Activated B cell treated with CpG ODN at 0.5 μM for 24 hours (primary cell): ENCODE measurements at regions of chr6 and their contacts with region 1.

Region 1: GRCh38 chr6:110528101-110528929 is 51.9 kb upstream of the SLC22A16 start:
- DNase-seq: no peak
- ATAC-seq: peak; percentile 70
- H3K4me3 Mint-ChIP-seq: no peak overlapping the region
- H3K27ac Mint-ChIP-seq: no peak overlapping the region
- H3K4me1 Mint-ChIP-seq: no peaks in the 10 kb centered on the region
- H3K27me3 Mint-ChIP-seq: peaks cover 3% of the 10 kb centered on the region
- CTCF ChIP-seq: no peak

Region 2: GRCh38 chr6:110949679-110950285 is 421.5 kb after region 1 on chr6:
- CTCF ChIA-PET with region 1: interaction called, 9 read pairs
- POLR2A ChIA-PET with region 1: no interaction called
- intact Hi-C with region 1: loop called (anchors 1 kb)
- DNase-seq: no peak
- ATAC-seq: no peak
- H3K4me3 Mint-ChIP-seq: no peak overlapping the region
- H3K27ac Mint-ChIP-seq: no peak overlapping the region
- H3K4me1 Mint-ChIP-seq: peaks cover 1% of the 10 kb centered on the region
- H3K27me3 Mint-ChIP-seq: no peaks in the 10 kb centered on the region
- CTCF ChIP-seq: no peak

Region 3: DNA sequence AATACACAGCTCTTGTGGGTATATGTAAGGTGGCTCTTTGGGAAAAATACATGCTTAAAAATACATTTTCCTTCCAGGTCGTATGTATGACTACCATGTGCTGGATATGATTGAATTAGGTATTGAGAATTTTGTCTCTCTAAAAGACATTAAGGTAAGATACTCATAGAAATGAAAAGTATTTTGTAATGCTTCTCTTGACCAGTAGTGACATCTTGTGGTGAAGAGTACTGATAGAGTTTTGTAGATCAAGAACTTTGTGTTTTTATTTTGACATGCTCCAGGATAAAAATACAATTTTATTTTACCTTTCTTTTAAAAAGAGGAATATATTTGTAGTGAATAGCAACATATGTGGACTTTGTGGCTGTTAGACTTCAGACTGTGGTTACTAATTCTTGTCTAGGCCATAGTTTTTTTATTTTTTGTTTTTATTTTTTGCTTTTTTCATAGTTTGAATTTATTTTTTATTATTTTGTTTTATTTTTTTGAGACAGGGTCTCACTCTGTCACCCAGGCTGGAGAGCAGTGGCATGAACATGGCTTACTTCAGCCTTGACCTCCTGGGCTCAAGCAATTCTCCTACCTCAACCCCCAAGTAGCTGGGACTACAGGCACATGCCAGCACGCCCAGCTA is 471.4 kb after region 1 on chr6:
- CTCF ChIA-PET with region 1: interaction called, 3 read pairs
- POLR2A ChIA-PET with region 1: no interaction called
- intact Hi-C with region 1: loop called (anchors 1 kb)
- DNase-seq: no peak
- ATAC-seq: no peak
- H3K4me3 Mint-ChIP-seq: no peak overlapping the region
- H3K27ac Mint-ChIP-seq: no peak overlapping the region
- H3K4me1 Mint-ChIP-seq: no peaks in the 10 kb centered on the region
- H3K27me3 Mint-ChIP-seq: no peaks in the 10 kb centered on the region
- CTCF ChIP-seq: no peak

Region 4: GRCh38 chr6:111027219-111027618 is 498.9 kb after region 1 on chr6:
- CTCF ChIA-PET with region 1: no interaction called
- POLR2A ChIA-PET with region 1: no interaction called
- intact Hi-C with region 1: loop called (anchors 1 kb)
- DNase-seq: no peak
- ATAC-seq: no peak
- H3K4me3 Mint-ChIP-seq: no peak overlapping the region
- H3K27ac Mint-ChIP-seq: no peak overlapping the region
- H3K4me1 Mint-ChIP-seq: no peaks in the 10 kb centered on the region
- H3K27me3 Mint-ChIP-seq: no peaks in the 10 kb centered on the region
- CTCF ChIP-seq: no peak

Region 5: DNA sequence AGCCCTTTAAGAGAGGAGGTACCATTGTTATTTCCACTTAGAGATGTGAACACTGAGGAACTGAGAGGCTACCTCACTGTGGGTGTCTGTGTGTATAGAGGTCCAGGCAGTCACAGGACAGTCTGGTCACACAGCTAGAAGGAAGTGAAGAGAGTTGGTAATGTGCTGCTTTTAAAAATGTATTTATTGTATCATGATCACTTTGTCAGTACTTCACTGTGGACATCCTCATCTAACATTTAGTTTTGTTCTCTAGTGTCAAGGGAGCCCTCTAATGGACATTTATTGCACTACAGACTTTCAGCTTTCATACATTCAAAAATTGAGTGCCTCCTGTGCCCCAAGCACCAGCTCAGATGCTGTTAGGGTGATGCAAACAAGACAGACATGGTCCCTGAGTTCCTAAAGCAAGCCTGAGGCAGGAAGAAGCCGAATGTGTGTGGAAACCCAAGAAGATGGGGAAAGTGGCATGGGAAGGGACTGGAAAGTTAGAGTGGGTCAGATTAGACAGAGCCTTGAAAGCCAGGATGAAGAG is 681.9 kb after region 1 on chr6:
- CTCF ChIA-PET with region 1: interaction called, 15 read pairs
- POLR2A ChIA-PET with region 1: no interaction called
- intact Hi-C with region 1: loop called (anchors 1 kb)
- DNase-seq: no peak
- ATAC-seq: peak; percentile 68
- H3K4me3 Mint-ChIP-seq: no peak overlapping the region
- H3K27ac Mint-ChIP-seq: no peak overlapping the region
- H3K4me1 Mint-ChIP-seq: no peaks in the 10 kb centered on the region
- H3K27me3 Mint-ChIP-seq: no peaks in the 10 kb centered on the region
- CTCF ChIP-seq: no peak